ENCODE measurements at regions of chr6 and their contacts with region 1.

Region 1: GRCh38 chr6:158571826-158572652 is 12.1 kb downstream of the TMEM181 start:
- DNase-seq: no peak
- H3K4me3 Mint-ChIP-seq: no peak overlapping the region
- H3K27ac Mint-ChIP-seq: no peak overlapping the region
- H3K4me1 Mint-ChIP-seq: peaks cover 62% of the 10 kb centered on the region
- H3K27me3 Mint-ChIP-seq: no peaks in the 10 kb centered on the region

Region 2: DNA sequence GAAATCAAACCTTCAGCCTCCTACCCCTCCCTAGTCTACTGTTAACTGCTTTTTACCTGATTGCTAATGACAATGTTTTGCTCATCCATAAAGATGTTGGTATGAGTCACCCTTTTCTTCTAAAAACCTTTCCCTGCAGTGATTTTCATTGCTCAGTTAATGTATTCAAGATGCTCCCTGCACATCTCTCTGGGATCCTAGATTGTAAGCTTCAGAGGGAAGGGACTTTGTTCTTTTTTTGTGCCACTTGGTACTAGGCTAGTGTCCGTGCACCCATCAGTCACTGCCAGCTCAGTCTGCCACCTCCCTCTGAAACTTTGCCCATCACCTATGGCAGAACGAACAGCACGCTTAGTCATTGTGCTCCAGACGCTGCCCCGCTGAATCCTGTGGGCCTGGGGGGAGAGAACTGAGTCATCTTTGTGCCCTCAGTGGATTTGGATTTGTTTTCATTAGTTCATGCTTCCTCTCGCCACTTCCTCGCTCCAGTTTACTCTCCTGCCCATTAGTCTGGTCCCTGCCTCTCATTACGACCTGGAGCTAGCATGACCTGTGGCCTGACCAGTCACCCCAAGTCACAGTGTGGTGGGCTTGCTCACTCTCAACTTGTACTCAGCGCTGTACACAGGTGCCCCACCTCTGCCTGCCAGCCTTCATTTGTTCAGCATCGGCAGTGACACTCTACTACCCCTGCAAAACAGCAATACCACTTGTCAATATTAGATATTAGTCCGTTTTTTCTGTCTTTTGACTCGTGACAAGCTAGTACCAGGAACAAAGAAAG is 90.2 kb before region 1 on chr6:
- CTCF ChIA-PET with region 1: no interaction called
- POLR2A ChIA-PET with region 1: no interaction called
- intact Hi-C with region 1: no loop called
- DNase-seq: peak; percentile 16
- H3K4me3 Mint-ChIP-seq: no peak overlapping the region
- H3K27ac Mint-ChIP-seq: no peak overlapping the region
- H3K4me1 Mint-ChIP-seq: no peaks in the 10 kb centered on the region
- H3K27me3 Mint-ChIP-seq: no peaks in the 10 kb centered on the region

Region 3: DNA sequence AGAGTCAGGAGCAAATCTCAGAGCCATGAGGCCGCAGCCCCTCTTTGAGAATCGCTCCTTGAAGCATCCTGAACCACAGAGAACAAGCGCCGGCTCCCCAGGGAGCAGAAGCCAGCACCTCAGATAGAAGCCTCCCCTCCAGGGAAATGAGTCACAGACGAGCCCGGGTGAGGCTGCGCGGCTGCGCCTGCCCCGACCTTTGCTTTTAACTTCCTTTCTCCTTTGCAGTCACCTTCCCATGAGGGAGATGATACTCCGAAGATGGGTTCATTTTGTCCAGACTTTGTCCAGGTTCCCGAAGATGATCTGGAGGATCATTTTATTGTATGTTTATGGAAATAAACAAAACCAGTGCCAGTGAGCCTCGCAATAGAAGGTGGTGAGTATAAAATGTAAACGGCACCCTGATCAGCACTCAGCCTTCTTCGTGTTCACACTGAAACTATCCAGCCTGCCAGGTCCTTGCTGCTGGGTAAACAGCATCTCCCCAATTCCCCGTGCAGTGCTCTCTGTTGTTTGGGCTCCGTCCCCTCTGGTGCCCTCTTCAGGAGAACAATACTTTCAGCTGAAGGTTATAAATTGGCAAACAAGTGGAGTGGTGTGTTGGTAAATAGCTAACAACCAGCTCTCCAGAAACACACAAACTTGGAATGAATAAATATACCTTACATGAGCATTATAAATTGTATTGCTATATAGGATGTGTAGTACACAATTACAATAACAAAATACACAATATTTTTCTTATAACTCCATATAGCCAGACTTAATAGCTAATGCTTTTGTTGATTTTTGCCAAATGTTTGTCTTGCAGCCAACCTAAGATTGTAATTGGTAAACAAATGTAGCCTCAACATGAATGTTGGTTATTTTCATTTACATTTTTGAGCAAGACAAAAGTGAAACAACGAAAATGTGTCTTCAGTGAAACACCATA is 53.6 kb before region 1 on chr6:
- CTCF ChIA-PET with region 1: interaction called, 4 read pairs
- POLR2A ChIA-PET with region 1: no interaction called
- intact Hi-C with region 1: loop called (anchors 5 kb)
- DNase-seq: peak; percentile 75
- H3K4me3 Mint-ChIP-seq: peak overlapping the region; percentile 85
- H3K27ac Mint-ChIP-seq: peak overlapping the region; percentile 83
- H3K4me1 Mint-ChIP-seq: peaks cover 25% of the 10 kb centered on the region
- H3K27me3 Mint-ChIP-seq: peaks cover 6% of the 10 kb centered on the region

Region 4: GRCh38 chr6:158559895-158560835 is 11.9 kb before region 1 on chr6 and contains the start of gene TMEM181:
- CTCF ChIA-PET with region 1: interaction called, 3 read pairs
- POLR2A ChIA-PET with region 1: interaction called, 5 read pairs
- intact Hi-C with region 1: loop called (anchors 2 kb)
- DNase-seq: peak; percentile 92
- H3K4me3 Mint-ChIP-seq: peak within 1 kb of the TSS; percentile 96
- H3K27ac Mint-ChIP-seq: peak within 1 kb of the TSS; percentile 91
- H3K4me1 Mint-ChIP-seq: peaks cover 43% of the 10 kb centered on the region
- H3K27me3 Mint-ChIP-seq: no peaks in the 10 kb centered on the region
- total RNA-seq, gene TMEM181: 11.3 to 11.6 TPM

Region 5: GRCh38 chr6:158686791-158687381 is 114.8 kb after region 1 on chr6:
- CTCF ChIA-PET with region 1: no interaction called
- POLR2A ChIA-PET with region 1: no interaction called
- intact Hi-C with region 1: no loop called
- DNase-seq: peak; percentile 38
- H3K4me3 Mint-ChIP-seq: no peak overlapping the region
- H3K27ac Mint-ChIP-seq: peak overlapping the region; percentile 47
- H3K4me1 Mint-ChIP-seq: peaks cover 64% of the 10 kb centered on the region
- H3K27me3 Mint-ChIP-seq: no peaks in the 10 kb centered on the region

Measured in activated CD4-positive, alpha-beta memory T cell treated with anti-CD3 and anti-CD28 coated beads for 36 hours (primary cell).